ENCODE measurements at regions of chr20 and their contacts with region 1.

Region 1: GRCh38 chr20:3312940-3313682 is 74.1 kb upstream of the SLC4A11 start:
- DNase-seq: peak in 1 of 2 donors; percentile 50
- H3K4me3 ChIP-seq: no peak overlapping the region
- CTCF ChIP-seq: no peak
- POLR2A ChIP-seq: no peak

Region 2: DNA sequence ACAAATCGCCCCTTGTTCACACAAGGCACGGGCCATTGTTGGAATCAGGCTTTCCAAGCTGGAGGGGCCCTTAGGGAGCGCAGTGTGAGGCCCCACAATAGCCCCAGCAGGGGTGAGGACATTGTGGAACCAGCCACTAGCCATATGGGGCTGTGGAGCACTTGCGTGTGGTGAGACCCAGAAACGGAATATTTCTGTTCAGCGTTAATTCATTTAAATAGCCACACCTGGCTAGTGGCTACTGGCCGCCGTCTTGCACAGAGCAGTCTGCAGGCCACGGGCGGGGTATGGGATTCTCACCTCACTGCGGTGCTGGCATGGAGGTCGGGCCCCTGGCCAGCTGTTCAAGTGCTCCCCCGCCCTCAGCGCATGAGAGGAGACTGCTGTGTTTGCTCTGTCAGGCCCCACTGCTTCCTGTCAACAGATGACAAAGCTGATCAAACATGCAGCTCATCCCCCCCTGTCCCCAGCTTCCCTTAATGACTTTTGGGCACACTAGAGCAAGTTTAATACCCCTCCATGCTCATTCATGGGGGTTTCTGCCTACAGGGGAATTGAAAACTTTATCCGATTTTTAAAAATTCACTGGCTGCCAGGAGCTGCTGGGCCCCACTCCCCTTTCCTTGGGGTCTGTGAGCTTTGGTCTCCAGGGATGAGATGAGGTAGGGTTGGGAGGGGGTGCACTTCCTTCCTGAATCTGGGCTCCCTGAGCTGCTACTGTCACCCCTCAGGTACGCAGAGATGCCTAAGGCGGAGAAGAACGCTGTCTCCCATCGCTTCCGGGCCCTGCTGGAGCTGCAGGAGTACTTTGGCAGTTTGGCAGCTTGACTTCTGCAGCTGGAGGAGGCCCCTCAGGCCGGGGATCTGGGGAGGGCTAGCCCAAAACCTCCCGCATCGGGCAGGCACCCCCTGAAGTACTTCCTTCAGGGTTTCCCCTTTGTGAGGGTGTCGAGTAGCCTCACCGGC is 90.2 kb before region 1 on chr20:
- intact Hi-C with region 1: loop called (anchors 10 kb)
- DNase-seq: no peak
- H3K4me3 ChIP-seq: no peak overlapping the region
- CTCF ChIP-seq: no peak
- POLR2A ChIP-seq: no peak

Region 3: DNA sequence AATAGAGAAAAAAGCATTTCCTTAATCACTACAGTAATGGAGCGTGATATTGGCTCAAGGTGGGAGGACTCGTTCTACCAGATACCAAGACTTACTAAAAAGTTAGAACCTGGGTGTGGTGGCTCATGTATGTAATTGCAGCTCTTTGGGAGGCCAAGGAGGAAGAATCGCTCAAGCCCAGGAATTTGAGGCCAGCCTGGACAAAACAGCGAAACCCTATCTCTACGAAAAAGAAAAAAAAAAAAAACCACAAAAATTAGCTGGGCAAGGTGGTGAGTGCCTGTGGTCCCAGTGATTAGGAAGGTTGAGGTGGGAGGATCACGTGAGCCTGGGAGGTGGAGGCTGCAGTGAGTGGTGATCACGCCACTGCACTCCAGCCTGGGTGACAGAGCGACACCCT is 133.7 kb after region 1 on chr20:
- intact Hi-C with region 1: no loop called
- DNase-seq: no peak
- H3K4me3 ChIP-seq: no peak overlapping the region
- CTCF ChIP-seq: no peak
- POLR2A ChIP-seq: no peak